ENCODE measurements at regions of chr12 and their contacts with region 1.

Region 1: DNA sequence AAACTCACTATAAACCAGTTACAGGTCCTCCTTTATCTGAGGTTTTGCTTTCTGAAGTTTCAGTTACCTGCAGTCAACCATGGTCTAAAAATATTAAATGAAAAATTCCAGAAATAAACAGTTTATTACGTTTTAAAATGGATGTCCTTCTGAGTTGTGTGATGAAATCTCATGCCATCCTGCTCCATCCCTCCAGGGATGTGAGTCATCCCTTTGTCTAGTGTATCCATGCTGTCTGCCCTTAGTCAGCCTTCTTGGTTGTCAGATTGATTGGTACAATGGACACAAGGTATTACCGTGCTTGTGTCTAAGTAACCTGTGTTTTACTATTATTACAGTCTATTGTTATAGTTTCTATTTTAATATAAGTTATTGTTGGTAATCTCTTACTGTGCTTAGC is 328.3 kb downstream of the APAF1 start:
- DNase-seq: no peak
- H3K4me3 ChIP-seq: no peak overlapping the region
- H3K27ac ChIP-seq: no peak overlapping the region
- H3K4me1 ChIP-seq: no peaks in the 10 kb centered on the region
- CTCF ChIP-seq: no peak

Region 2: DNA sequence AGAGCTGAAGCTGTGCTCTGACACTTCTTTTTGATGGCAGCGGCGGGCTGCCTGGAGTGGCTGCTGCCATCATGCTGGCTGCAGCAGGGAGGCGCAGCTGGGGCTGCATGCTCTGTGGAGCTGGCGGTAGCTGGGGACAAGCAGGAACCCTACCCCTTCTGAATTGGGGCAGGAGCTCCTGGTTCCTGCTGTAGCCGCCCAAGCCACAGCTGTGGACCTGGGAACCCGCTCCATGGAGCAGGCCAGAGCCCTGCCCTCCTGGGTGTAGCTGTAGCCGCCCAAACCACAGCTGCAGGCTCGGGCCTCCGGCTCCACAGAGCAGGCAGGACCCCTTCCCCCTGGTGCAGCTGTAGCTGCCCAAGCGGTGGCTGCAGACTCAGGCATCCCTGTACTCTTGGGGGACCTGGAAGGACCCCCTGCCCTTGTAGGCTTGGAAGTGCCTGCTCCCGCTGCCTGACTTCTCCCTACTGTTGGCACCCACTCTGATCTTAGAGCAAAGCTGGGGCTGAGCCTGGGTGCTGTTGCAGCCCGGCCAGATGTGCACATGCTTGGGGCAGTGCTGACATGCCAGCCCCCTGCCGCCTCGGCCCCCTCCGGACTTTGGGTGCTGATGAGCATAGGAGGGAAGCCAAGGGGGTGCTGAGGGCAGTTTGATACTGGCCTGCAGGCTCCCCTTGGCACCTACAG is 295.0 kb before region 1 on chr12:
- CTCF ChIA-PET with region 1: no interaction called
- POLR2A ChIA-PET with region 1: interaction called, 10 read pairs
- intact Hi-C with region 1: no loop called
- DNase-seq: no peak
- H3K4me3 ChIP-seq: no peak overlapping the region
- H3K27ac ChIP-seq: no peak overlapping the region
- H3K4me1 ChIP-seq: no peaks in the 10 kb centered on the region
- CTCF ChIP-seq: no peak

Region 3: GRCh38 chr12:98955277-98955676 is 18.1 kb before region 1 on chr12:
- CTCF ChIA-PET with region 1: no interaction called
- POLR2A ChIA-PET with region 1: no interaction called
- intact Hi-C with region 1: no loop called
- DNase-seq: peak; percentile 49
- H3K4me3 ChIP-seq: no peak overlapping the region
- H3K27ac ChIP-seq: no peak overlapping the region
- H3K4me1 ChIP-seq: no peaks in the 10 kb centered on the region
- CTCF ChIP-seq: peak; percentile 71